ENCODE measurements at regions of chr12 and their contacts with region 1.

Region 1: DNA sequence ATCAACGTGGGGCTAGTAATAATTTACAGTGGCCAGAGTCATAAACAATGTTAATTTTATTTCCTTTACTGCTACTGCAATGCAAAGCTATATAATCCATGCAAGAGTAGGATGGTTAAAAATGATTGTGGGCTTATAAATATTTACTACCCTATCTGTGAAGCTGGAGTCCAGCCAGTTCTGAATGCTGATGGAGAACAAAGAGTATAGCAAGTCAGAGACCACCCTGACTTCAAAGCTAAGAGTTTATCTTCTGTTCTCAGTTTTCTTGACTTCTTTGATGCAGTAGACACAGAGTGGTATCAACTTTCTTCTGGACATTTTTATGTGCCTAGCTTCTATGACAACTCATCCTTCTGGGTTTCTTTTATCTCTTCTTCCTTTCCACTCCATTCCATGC is 34.0 kb upstream of the OVCH1 start:
- DNase-seq: no peak
- ATAC-seq: no peak
- H3K4me3 Mint-ChIP-seq: no peak overlapping the region
- H3K27ac Mint-ChIP-seq: no peak overlapping the region
- H3K4me1 Mint-ChIP-seq: no peaks in the 10 kb centered on the region
- H3K27me3 Mint-ChIP-seq: peaks cover 21% of the 10 kb centered on the region
- CTCF ChIP-seq: no peak

Region 2: GRCh38 chr12:29519585-29520182 is 11.8 kb before region 1 on chr12:
- CTCF ChIA-PET with region 1: interaction called, 10 read pairs
- POLR2A ChIA-PET with region 1: no interaction called
- intact Hi-C with region 1: no loop called
- DNase-seq: peak; percentile 41
- ATAC-seq: no peak
- H3K4me3 Mint-ChIP-seq: no peak overlapping the region
- H3K27ac Mint-ChIP-seq: no peak overlapping the region
- H3K4me1 Mint-ChIP-seq: no peaks in the 10 kb centered on the region
- H3K27me3 Mint-ChIP-seq: peaks cover 6% of the 10 kb centered on the region
- CTCF ChIP-seq: peak; percentile 71